OCI-LY7 (cell line): ENCODE measurements at regions of chr5 and their contacts with region 1.

Region 1: GRCh38 chr5:55691265-55692105 is 20.6 kb downstream of the SLC38A9 start:
- DNase-seq: peak; percentile 64
- H3K4me3 ChIP-seq: no peak overlapping the region
- H3K27ac ChIP-seq: no peak overlapping the region
- H3K4me1 ChIP-seq: no peaks in the 10 kb centered on the region
- CTCF ChIP-seq: peak; percentile 91

Region 2: GRCh38 chr5:55226027-55226933 is 465.2 kb before region 1 on chr5:
- CTCF ChIA-PET with region 1: no interaction called
- POLR2A ChIA-PET with region 1: no interaction called
- intact Hi-C with region 1: loop called (anchors 2 kb)
- DNase-seq: peak; percentile 74
- H3K4me3 ChIP-seq: peak overlapping the region; percentile 66
- H3K27ac ChIP-seq: no peak overlapping the region
- H3K4me1 ChIP-seq: peaks cover 11% of the 10 kb centered on the region
- CTCF ChIP-seq: peak; percentile 80

Region 3: DNA sequence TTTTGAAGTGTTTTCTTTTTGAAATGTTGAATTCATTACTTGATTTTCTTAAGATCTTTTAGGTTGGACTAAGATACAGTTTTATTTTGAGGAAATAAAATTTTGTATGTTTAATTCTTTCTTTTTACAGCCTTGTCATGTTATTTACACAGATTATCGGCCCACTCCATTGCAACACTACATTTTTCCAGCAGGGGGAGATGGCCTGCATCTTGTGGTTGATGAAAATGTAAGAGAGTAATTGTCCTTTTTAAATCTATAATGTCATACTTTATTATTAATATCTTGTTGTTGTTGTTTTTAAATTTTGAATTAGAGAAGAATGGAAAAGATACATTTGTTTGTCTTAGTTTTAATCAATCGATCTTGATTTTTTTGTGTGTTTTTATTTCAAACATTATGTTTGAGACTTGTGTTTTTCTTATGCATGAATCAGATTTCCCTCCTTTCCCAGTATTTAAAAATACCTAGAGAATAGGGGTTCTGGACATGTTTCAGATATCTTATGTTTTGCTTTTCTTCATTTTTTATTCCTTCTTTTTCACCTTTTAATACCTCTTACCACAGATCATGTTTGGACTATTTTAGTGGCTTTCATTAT is 347.0 kb before region 1 on chr5:
- CTCF ChIA-PET with region 1: no interaction called
- POLR2A ChIA-PET with region 1: interaction called, 3 read pairs
- intact Hi-C with region 1: loop called (anchors 2 kb)
- DNase-seq: peak; percentile 49
- H3K4me3 ChIP-seq: no peak overlapping the region
- H3K27ac ChIP-seq: no peak overlapping the region
- H3K4me1 ChIP-seq: no peaks in the 10 kb centered on the region
- CTCF ChIP-seq: peak; percentile 92

Region 4: DNA sequence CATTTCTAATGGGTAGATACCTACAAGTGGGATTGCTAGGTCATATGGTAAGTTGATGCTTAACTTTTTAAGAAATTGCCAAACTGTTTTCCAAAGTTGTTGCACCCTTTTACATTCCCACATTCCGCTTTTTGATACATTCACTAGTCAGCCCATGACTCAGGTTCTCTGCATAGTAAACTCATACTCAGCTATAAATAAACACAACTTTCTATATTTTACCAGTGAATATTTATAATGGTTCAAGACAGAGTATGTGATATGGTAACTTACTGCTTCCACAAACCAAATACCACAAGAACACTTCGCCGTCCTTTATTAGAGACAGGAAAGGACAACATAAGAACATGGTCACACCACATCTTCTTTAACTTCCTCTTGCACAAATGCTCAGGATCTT is 210.7 kb before region 1 on chr5:
- CTCF ChIA-PET with region 1: no interaction called
- POLR2A ChIA-PET with region 1: no interaction called
- intact Hi-C with region 1: loop called (anchors 5 kb)
- DNase-seq: no peak
- H3K4me3 ChIP-seq: no peak overlapping the region
- H3K27ac ChIP-seq: no peak overlapping the region
- H3K4me1 ChIP-seq: no peaks in the 10 kb centered on the region
- CTCF ChIP-seq: no peak

Region 5: DNA sequence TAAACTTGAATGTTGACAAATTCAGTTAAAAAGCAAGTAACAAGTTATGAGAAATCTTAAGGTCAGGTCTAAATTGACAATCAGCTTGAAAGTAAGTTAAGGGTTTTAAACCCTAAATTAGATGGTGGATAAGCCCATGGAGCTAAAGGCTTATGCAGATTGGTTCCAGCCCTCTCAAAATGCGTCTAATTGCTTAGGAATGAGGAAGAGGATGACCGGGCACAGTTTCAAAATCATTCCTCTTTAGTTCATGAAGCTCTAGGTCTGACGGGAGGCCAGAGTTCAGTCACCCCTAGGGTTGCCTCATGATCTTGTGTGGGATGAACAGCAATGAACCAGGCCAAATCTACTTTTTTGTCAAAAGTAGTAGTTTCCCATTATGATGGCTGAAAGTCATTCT is 54.8 kb before region 1 on chr5:
- CTCF ChIA-PET with region 1: no interaction called
- POLR2A ChIA-PET with region 1: no interaction called
- intact Hi-C with region 1: no loop called
- DNase-seq: no peak
- H3K4me3 ChIP-seq: no peak overlapping the region
- H3K27ac ChIP-seq: no peak overlapping the region
- H3K4me1 ChIP-seq: no peaks in the 10 kb centered on the region
- CTCF ChIP-seq: no peak

Region 6: GRCh38 chr5:55668356-55668755 is 23.1 kb before region 1 on chr5:
- CTCF ChIA-PET with region 1: no interaction called
- POLR2A ChIA-PET with region 1: interaction called, 3 read pairs
- intact Hi-C with region 1: loop called (anchors 2 kb)
- DNase-seq: peak; percentile 11
- H3K4me3 ChIP-seq: no peak overlapping the region
- H3K27ac ChIP-seq: peak overlapping the region; percentile 23
- H3K4me1 ChIP-seq: peaks cover 30% of the 10 kb centered on the region
- CTCF ChIP-seq: no peak

Region 7: DNA sequence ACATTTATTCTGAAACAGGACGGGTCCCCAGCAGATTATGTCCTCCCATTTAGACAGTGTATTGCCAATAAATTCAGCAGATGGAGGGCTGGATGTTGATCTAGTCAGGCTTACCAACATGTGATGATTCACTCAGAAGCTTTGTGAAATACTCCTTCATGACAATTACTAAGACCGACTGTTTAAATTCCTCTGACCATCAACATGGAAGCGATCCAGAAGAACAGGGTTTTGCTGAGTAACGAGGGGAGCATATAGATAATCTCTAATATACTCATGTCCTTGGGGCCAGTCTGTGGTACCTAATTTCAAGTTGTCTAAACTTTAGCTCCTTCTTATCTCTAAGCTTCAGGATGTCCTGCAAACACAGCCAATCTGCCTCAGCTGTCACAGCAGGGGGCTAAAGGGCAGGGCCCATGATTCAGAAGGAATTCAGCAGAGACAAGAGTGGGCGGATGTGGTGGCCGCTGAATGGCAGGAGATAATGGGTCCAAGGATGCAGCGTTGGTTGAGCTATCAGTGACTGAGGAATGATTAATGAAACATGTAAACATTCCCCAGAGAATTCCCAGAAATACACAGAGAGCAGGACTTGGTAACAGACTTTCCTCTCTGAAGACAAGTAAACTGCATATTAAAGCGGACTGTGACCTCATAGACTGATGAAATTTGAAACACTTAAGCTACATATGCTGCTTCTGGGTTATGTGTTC is 432.2 kb after region 1 on chr5:
- CTCF ChIA-PET with region 1: no interaction called
- POLR2A ChIA-PET with region 1: no interaction called
- intact Hi-C with region 1: no loop called
- DNase-seq: no peak
- H3K4me3 ChIP-seq: no peak overlapping the region
- H3K27ac ChIP-seq: no peak overlapping the region
- H3K4me1 ChIP-seq: no peaks in the 10 kb centered on the region
- CTCF ChIP-seq: no peak